ENCODE measurements at regions of chr5 and their contacts with region 1.

Region 1: GRCh38 chr5:160199410-160199911 is 29.8 kb upstream of the FABP6 start:
- DNase-seq: peak in 1 of 2 donors; percentile 80
- H3K4me3 ChIP-seq: peak overlapping the region; percentile 51 to 62
- H3K27ac ChIP-seq: no peak overlapping the region
- H3K4me1 ChIP-seq: peaks cover 0 to 2% of the 10 kb centered on the region in 2 donors
- H3K27me3 ChIP-seq: no peaks in the 10 kb centered on the region
- CTCF ChIP-seq: peak; percentile 73 to 94 (median 81)

Region 2: GRCh38 chr5:160021831-160022446 is 177.5 kb before region 1 on chr5:
- intact Hi-C with region 1: loop called (anchors 1 kb)
- DNase-seq: no peak
- H3K4me3 ChIP-seq: no peak overlapping the region
- H3K27ac ChIP-seq: no peak overlapping the region
- H3K4me1 ChIP-seq: peaks cover 0 to 4% of the 10 kb centered on the region in 2 donors
- H3K27me3 ChIP-seq: no peaks in the 10 kb centered on the region
- CTCF ChIP-seq: peak; percentile 70 to 83 (median 73)

Region 3: DNA sequence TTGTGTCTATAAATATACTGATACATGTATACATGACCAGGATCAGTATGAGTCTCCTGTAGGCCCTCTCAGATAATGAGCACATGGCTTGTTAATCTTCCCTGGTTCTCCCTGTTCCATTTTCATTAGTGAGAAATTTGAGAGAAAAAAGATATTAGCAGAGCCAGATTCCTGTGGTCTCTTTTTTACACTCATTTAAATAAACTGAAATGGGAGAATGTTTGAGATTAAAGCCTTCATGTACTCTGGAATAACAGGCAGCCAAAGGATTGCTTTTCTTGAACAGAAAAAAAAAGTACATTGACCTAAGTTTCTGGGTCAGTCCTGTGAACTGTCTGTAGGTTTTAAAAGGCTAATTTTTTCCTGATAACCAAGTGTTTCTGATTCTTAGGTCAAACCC is 124.4 kb before region 1 on chr5:
- intact Hi-C with region 1: loop called (anchors 5 kb)
- DNase-seq: no peak
- H3K4me3 ChIP-seq: no peak overlapping the region
- H3K27ac ChIP-seq: no peak overlapping the region
- H3K4me1 ChIP-seq: peaks cover 0 to 7% of the 10 kb centered on the region in 2 donors
- H3K27me3 ChIP-seq: no peaks in the 10 kb centered on the region
- CTCF ChIP-seq: no peak

Region 4: GRCh38 chr5:160324886-160325285 is 125.4 kb after region 1 on chr5:
- intact Hi-C with region 1: no loop called
- DNase-seq: no peak
- H3K4me3 ChIP-seq: no peak overlapping the region
- H3K27ac ChIP-seq: no peak overlapping the region
- H3K4me1 ChIP-seq: no peaks in the 10 kb centered on the region
- H3K27me3 ChIP-seq: no peaks in the 10 kb centered on the region
- CTCF ChIP-seq: no peak

Region 5: DNA sequence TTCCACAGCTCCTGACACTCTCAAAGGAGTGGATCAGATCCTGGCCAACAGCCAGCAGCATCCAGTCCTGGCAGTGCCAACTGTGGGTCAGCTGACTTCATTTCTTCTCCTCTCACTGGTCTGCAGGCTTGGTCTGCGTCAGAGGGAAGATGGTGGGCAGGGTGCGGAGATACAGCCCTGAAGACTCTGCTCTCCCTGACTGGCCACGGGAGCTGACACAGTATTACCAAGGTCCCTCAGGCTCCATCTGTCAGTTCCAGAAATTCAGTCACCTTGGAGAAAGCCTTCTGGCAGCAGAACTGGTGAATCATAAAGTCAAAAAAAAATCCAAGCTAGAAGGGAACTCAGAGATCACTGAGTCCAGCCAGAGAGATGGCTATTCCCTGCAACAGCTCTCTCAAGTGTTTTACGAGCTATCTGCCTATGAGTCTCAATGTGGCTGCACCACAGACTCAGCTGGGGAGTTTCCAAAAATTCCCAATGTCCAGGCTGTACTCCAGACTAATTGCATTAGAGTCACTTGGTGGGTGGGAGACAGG is 143.0 kb after region 1 on chr5:
- intact Hi-C with region 1: loop called (anchors 1 kb)
- DNase-seq: no peak
- H3K4me3 ChIP-seq: no peak overlapping the region
- H3K27ac ChIP-seq: no peak overlapping the region
- H3K4me1 ChIP-seq: no peaks in the 10 kb centered on the region
- H3K27me3 ChIP-seq: no peaks in the 10 kb centered on the region
- CTCF ChIP-seq: no peak

Region 6: GRCh38 chr5:160390787-160391696 is 191.6 kb after region 1 on chr5:
- intact Hi-C with region 1: loop called (anchors 1 kb)
- DNase-seq: no peak
- H3K4me3 ChIP-seq: no peak overlapping the region
- H3K27ac ChIP-seq: no peak overlapping the region
- H3K4me1 ChIP-seq: peaks cover 0 to 5% of the 10 kb centered on the region in 2 donors
- H3K27me3 ChIP-seq: no peaks in the 10 kb centered on the region
- CTCF ChIP-seq: peak; percentile 42 to 54 (median 48)